A549 (cell line): ENCODE measurements at regions of chr2 and their contacts with region 1.

Region 1: DNA sequence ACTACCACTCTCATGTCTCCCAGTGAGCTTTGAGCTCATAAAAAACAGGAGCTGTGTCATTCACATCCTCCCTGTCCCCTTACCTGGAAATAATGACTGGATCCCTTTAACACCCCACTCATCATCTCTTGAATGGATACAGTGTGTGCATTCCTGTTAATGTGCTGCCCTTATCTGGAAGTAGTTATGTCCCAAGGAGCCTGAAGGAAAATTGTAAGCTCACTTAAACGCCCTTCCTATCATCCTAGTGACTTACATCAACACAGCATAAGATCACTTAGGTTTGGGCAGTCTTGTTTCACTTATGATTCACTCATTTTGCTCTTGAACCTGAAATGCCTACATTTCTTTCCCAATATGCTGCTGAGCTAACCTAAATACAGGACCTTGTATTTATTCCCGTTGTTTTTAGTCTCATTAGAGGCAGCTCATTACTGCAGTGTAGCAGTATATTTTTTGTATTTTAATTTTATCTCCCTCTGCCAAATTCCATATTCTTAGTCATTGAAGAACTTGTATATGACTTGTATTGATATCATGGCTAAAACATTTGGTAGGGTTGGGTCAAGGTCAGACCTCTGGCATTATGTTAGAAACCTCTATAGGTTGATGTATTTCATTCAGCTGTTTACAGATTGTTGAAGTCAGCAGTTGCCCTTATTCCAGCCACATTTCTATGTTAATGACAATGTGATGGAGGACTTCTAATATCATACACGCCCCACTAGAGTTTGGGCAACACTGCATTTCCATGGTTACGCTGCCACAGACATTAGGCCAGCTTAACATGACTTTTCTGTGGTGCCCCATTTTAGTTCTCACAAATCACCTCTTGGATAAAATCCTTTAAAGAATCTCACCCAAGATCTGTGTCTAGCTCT is 72.9 kb downstream of the PKP4 start:
- DNase-seq: no peak
- ATAC-seq: peak; percentile 43 to 58; a peak in 4 of 6 replicates
- H3K4me3 ChIP-seq: no peak overlapping the region
- H3K27ac ChIP-seq: no peak overlapping the region
- H3K4me1 ChIP-seq: no peaks in the 10 kb centered on the region
- CTCF ChIP-seq: no peak
- EP300 ChIP-seq: no peak
- POLR2A ChIP-seq: no peak
- RAD21 ChIP-seq: no peak

Region 2: GRCh38 chr2:158496986-158497385 is 32.6 kb before region 1 on chr2:
- CTCF ChIA-PET with region 1: no interaction called
- POLR2A ChIA-PET with region 1: no interaction called
- DNase-seq: no peak
- ATAC-seq: peak in 1 of 2 experiments; percentile 39; a peak in 3 of 6 replicates
- H3K4me3 ChIP-seq: no peak overlapping the region
- H3K27ac ChIP-seq: peak overlapping the region; percentile 66 to 79
- H3K4me1 ChIP-seq: peaks cover 87% of the 10 kb centered on the region
- CTCF ChIP-seq: no peak
- EP300 ChIP-seq: no peak
- POLR2A ChIP-seq: no peak
- RAD21 ChIP-seq: no peak

Region 3: DNA sequence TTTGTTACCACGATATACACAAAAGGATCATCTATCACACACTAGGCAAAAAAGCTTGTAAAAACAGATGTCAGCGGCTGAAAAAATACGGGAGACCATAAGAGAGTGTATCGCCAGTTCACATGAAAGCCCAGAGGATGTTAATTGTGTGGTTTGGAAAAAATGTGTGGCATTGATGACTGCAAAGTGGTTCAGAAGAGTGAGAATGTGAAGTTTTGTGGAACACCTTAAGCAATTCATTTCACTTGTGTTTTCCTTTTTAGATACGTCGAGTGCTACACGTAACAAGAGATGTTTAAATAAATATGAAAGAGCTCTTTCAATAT is 203.8 kb after region 1 on chr2:
- CTCF ChIA-PET with region 1: no interaction called
- POLR2A ChIA-PET with region 1: interaction called, 10 read pairs
- DNase-seq: no peak
- ATAC-seq: no peak
- H3K4me3 ChIP-seq: no peak overlapping the region
- H3K27ac ChIP-seq: no peak overlapping the region
- H3K4me1 ChIP-seq: no peaks in the 10 kb centered on the region
- CTCF ChIP-seq: no peak
- EP300 ChIP-seq: no peak
- POLR2A ChIP-seq: no peak
- RAD21 ChIP-seq: no peak